Activated CD4-positive, alpha-beta T cell treated with anti-CD3 and anti-CD28 coated beads, Interleukin-2, amount 10 ng/mL, durations not matched to agents 24 days and 14 days (primary cell): ENCODE measurements at regions of chr1 and their contacts with region 1.

Region 1: DNA sequence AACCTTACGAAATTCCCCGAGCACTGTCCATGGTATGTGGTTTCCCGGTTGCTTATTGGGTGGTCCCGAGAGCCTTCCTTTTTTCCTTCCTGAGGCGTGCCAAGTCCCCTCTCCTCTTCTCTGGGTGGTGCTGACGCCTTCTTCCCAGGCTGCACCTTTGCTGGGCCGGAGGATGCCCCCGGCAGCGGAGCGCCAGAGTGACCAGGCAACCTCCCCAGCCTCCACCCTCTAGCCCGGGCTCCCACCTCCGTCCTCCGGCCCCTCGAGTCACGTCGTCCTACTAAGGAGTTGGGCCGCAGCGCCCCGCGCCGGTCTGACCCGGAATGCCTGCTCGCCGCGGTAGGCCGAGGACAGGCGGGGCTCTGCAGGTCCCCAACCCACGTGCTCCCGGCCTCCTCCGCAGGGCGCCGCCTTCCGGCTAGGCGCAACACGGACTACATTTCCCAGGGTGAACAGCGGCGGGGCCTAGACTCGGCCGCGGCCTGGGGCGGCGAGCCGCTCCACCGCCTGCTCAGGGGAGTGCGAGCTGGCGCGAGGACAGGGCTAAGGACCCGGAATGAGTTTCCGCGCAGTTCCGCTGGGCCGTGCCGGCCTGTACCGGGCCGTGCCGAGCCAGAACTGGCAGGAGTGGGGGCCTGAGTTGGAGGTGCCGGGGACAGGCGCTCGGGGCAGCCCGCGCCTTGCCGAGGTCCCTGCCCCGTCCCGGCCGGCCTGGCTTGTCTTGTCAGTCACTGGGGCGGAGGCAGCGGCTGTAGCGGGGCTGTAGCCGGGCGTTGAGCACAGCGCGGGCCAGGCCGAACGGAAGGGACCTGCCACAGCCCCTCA is at the start of gene IPO13:
- DNase-seq: peak; percentile 99
- H3K4me3 Mint-ChIP-seq: peak within 1 kb of the TSS; percentile 99
- H3K27ac Mint-ChIP-seq: peak within 1 kb of the TSS; percentile 97
- H3K4me1 Mint-ChIP-seq: peaks cover 44% of the 10 kb centered on the region
- H3K27me3 Mint-ChIP-seq: no peaks in the 10 kb centered on the region
- total RNA-seq, gene IPO13: 26.3 and 26.6 TPM in 2 replicates

Region 2: DNA sequence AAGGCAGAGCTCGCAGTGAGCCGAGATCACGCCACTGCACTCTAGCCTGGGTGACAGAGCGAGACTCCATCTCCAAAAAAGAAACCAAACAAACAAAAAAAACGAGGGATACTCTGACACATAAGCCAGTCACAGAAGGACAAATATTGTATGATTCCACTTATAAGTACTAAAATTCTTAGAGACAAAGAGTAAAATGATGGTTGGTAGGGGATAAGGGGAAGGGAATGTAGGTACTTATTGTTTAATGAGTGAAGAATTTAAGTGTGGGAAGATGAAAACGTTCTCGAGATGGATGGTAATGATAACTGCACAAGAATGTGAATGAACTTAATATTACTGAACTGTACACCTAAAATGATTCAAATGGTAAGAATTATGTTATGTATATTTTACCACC is 1715.2 kb before region 1 on chr1:
- intact Hi-C with region 1: no loop called
- DNase-seq: no peak
- H3K4me3 Mint-ChIP-seq: no peak overlapping the region
- H3K27ac Mint-ChIP-seq: no peak overlapping the region
- H3K4me1 Mint-ChIP-seq: no peaks in the 10 kb centered on the region
- H3K27me3 Mint-ChIP-seq: no peaks in the 10 kb centered on the region

Region 3: GRCh38 chr1:43454266-43455011 is 492.0 kb before region 1 on chr1:
- intact Hi-C with region 1: loop called (anchors 2 kb)
- DNase-seq: peak; percentile 89
- H3K4me3 Mint-ChIP-seq: peak overlapping the region; percentile 87
- H3K27ac Mint-ChIP-seq: peak overlapping the region; percentile 88
- H3K4me1 Mint-ChIP-seq: peaks cover 23% of the 10 kb centered on the region
- H3K27me3 Mint-ChIP-seq: peaks cover 33% of the 10 kb centered on the region

Region 4: DNA sequence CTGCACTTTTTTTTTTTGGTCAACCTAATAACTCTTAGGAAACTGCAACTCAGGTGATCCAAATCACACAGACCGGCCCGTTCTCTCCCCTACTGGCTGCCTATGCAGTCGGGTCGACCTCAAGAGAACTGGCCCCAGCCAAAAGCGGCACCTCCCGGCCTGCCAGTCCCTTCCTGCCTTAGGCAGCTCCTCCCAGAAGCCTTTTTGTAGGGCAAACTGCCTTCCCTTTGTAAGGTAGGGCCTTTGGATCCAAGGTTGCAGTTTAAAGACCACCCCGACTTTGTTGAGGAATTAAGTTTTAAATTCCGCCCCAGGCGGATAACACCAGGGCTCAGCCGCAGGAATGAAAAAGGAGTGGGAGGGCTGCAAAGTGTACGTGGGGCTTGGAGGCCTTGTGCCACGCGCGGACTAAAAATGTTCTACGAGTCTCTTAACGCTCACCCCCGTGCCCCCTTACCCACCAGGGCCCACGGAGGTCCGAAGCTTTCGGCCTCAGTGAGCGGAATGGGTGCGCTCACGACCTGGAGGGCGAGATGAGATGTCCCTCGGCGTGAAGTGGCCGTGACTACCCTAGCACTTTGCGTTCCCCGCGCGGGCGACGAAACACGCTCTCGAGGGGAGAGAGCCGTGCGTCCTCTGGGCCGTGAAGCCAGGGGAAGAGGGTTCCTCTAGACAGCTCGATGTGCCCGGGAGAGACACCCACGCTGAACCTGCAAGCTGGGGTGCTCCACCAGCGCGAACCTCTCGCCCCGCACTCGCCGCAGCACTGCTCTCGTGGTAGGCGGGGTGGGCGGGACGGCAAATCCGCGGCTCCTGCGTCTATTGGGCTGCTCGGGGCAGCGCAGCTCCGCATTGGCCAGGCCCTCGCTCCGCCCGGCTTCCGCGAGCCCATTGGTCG is 239.6 kb before region 1 on chr1:
- intact Hi-C with region 1: loop called (anchors 1 kb)
- DNase-seq: peak; percentile 98
- H3K4me3 Mint-ChIP-seq: peak overlapping the region; percentile 93
- H3K27ac Mint-ChIP-seq: peak overlapping the region; percentile 89
- H3K4me1 Mint-ChIP-seq: peaks cover 32% of the 10 kb centered on the region
- H3K27me3 Mint-ChIP-seq: no peaks in the 10 kb centered on the region

Region 5: GRCh38 chr1:43974443-43975248 is 28.2 kb after region 1 on chr1 and contains the start of gene ATP6V0B:
- intact Hi-C with region 1: loop called (anchors 1 kb)
- DNase-seq: peak; percentile 99
- H3K4me3 Mint-ChIP-seq: peak within 1 kb of the TSS; percentile 91
- H3K27ac Mint-ChIP-seq: peak within 1 kb of the TSS; percentile 86
- H3K4me1 Mint-ChIP-seq: peaks cover 49% of the 10 kb centered on the region
- H3K27me3 Mint-ChIP-seq: no peaks in the 10 kb centered on the region
- total RNA-seq, gene ATP6V0B: 181 and 182 TPM in 2 replicates

Region 6: GRCh38 chr1:44029906-44030604 is 83.6 kb after region 1 on chr1:
- intact Hi-C with region 1: loop called (anchors 1 kb)
- DNase-seq: peak; percentile 97
- H3K4me3 Mint-ChIP-seq: peak overlapping the region; percentile 95
- H3K27ac Mint-ChIP-seq: peak overlapping the region; percentile 93
- H3K4me1 Mint-ChIP-seq: peaks cover 31% of the 10 kb centered on the region
- H3K27me3 Mint-ChIP-seq: no peaks in the 10 kb centered on the region